HepG2 (cell line): ENCODE measurements at regions of chr20 and their contacts with region 1.

Region 1: GRCh38 chr20:57383447-57384347 is 7.5 kb upstream of the RBM38 start:
- DNase-seq: no peak
- ATAC-seq: no peak
- H3K4me3 ChIP-seq: no peak overlapping the region
- H3K27ac ChIP-seq: no peak overlapping the region
- H3K4me1 ChIP-seq: 0 out of 2 replicates have a peak, but pooled peaks cover 2% of the 10 kb centered on the region
- H3K27me3 ChIP-seq: no peaks in the 10 kb centered on the region
- CTCF ChIP-seq: no peak
- EP300 ChIP-seq: no peak
- POLR2A ChIP-seq: no peak
- RAD21 ChIP-seq: no peak

Region 2: GRCh38 chr20:57493091-57493615 is 109.5 kb after region 1 on chr20:
- CTCF ChIA-PET with region 1: interaction called, 127 read pairs
- POLR2A ChIA-PET with region 1: no interaction called
- in situ Hi-C with region 1: loop called (anchors 5 kb)
- intact Hi-C with region 1: loop called (anchors 1 kb)
- DNase-seq: no peak
- ATAC-seq: no peak; the same call in 2 of the 3 replicates
- H3K4me3 ChIP-seq: no peak overlapping the region
- H3K27ac ChIP-seq: no peak overlapping the region
- H3K4me1 ChIP-seq: no peaks in the 10 kb centered on the region; the same call in 1 of the 2 replicates
- H3K27me3 ChIP-seq: peaks cover 3 to 6% of the 10 kb centered on the region in 2 experiments; a peak in 2 of 5 replicates
- CTCF ChIP-seq: no peak
- EP300 ChIP-seq: no peak
- POLR2A ChIP-seq: no peak
- RAD21 ChIP-seq: no peak